Sciatic nerve (tissue), 2 donors: ENCODE measurements at regions of chr1 and their contacts with region 1.

Region 1: DNA sequence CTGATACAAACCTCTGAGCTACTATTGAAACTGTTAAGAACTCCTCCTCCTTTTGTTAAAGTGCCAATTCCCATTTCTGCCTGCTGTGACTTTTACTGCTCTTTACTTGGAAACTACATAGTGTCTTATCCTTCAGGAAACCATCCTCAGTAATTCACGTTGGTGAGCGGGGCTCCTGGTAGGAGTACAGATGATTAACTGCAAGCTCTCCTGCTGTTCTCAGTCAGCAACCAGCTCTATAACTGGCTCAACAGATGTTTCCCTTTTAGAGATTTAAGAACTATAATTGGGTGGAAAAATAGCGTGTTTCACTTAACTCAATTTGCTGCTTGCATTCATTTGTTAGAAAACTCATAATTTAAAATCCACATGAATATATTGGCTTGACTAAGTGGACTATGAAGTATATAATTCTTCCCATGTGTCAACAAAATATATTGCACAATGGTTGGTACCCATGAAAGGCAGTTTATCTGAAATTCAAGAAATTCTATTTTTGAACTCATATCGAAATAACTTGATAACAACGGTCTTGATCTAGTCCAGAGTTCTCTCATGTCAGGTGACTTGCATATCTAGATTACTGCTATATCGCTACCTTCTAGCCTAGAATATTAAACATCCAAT is 574.0 kb downstream of the KCNT2 start:
- DNase-seq: no peak
- ATAC-seq: no peak

Region 2: GRCh38 chr1:194717941-194718340 is 1316.3 kb before region 1 on chr1:
- intact Hi-C with region 1: loop called (anchors 5 kb)
- DNase-seq: no peak
- ATAC-seq: no peak

Region 3: DNA sequence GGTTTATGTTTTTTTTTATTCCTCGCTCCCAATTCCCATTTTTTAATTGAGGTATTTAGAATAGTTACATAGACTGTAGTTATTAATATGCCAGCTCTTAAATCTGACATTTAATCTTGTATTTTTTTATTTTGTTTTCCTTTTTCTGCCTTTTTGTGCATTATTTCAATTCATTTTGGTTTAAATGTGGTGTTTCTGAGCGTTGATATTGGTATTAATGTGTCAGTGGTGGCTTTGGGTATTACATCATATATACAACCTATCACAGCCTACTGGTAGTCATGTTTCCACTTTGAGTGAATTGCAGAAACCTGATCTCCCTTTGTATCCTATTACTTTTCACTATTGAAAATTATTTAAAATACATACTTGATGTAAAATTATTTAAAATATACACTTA is 453.2 kb before region 1 on chr1:
- intact Hi-C with region 1: no loop called
- DNase-seq: no peak
- ATAC-seq: no peak